ENCODE measurements at regions of chr12 and their contacts with region 1.

Region 1: DNA sequence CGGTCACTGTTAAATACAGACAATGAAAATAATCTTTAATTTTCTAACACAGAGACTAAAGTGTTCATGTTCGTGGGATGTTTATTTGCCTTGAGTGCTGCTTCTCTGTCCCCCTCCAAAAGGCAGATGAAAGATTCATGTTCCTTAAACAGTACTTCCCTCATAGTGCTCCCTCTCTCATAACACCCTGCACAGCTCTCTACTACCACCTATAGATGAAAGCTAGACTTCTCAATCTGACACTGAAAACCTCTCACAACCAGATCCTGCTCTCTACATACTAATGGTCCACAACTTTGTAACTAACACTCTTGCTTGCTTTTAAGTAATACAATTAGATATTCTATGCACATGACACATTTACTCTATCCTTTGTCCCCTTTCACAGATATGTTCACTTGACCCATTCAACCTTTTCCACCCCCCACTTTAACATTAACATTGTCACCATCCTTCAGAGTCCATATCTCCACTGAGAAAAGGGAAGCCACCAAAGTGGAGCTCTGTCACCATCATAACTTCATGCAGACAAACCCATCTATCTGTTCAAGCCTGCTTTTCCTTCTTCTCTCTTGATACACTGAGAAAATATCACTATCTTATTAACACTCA is 266.4 kb upstream of the USP15 start:
- DNase-seq: peak; percentile 48
- ATAC-seq: peak; percentile 96
- H3K4me3 ChIP-seq: no peak overlapping the region
- H3K27ac ChIP-seq: no peak overlapping the region
- H3K4me1 ChIP-seq: no peaks in the 10 kb centered on the region
- H3K27me3 ChIP-seq: no peaks in the 10 kb centered on the region
- CTCF ChIP-seq: peak; percentile 51 to 82 (median 75); a peak in 5 of 6 replicates
- POLR2A ChIP-seq: no peak
- RAD21 ChIP-seq: peak; percentile 76

Region 2: GRCh38 chr12:60501124-60501729 is 1492.6 kb before region 1 on chr12:
- CTCF ChIA-PET with region 1: no interaction called
- POLR2A ChIA-PET with region 1: no interaction called
- RAD21 ChIA-PET with region 1: no interaction called
- intact Hi-C with region 1: loop called (anchors 1 kb)
- DNase-seq: no peak
- ATAC-seq: peak; percentile 53
- H3K4me3 ChIP-seq: no peak overlapping the region
- H3K27ac ChIP-seq: no peak overlapping the region
- H3K4me1 ChIP-seq: no peaks in the 10 kb centered on the region
- H3K27me3 ChIP-seq: no peaks in the 10 kb centered on the region
- CTCF ChIP-seq: peak; percentile 10 to 23 (median 20); a peak in 4 of 6 replicates
- POLR2A ChIP-seq: no peak
- RAD21 ChIP-seq: peak; percentile 49

Region 3: GRCh38 chr12:61546318-61546717 is 447.5 kb before region 1 on chr12:
- CTCF ChIA-PET with region 1: no interaction called
- POLR2A ChIA-PET with region 1: no interaction called
- RAD21 ChIA-PET with region 1: no interaction called
- intact Hi-C with region 1: loop called (anchors 5 kb)
- DNase-seq: peak; percentile 26
- ATAC-seq: peak; percentile 82
- H3K4me3 ChIP-seq: no peak overlapping the region
- H3K27ac ChIP-seq: no peak overlapping the region
- H3K4me1 ChIP-seq: no peaks in the 10 kb centered on the region
- H3K27me3 ChIP-seq: no peaks in the 10 kb centered on the region
- CTCF ChIP-seq: peak; percentile 17 to 42 (median 39); a peak in 4 of 6 replicates
- POLR2A ChIP-seq: no peak
- RAD21 ChIP-seq: peak; percentile 43

Region 4: GRCh38 chr12:61654698-61655097 is 339.1 kb before region 1 on chr12:
- CTCF ChIA-PET with region 1: no interaction called
- POLR2A ChIA-PET with region 1: no interaction called
- RAD21 ChIA-PET with region 1: no interaction called
- intact Hi-C with region 1: loop called (anchors 5 kb)
- DNase-seq: peak; percentile 13
- ATAC-seq: peak; percentile 60
- H3K4me3 ChIP-seq: no peak overlapping the region
- H3K27ac ChIP-seq: no peak overlapping the region
- H3K4me1 ChIP-seq: no peaks in the 10 kb centered on the region
- H3K27me3 ChIP-seq: no peaks in the 10 kb centered on the region
- CTCF ChIP-seq: peak in 2 of 3 experiments; percentile 26 to 40; a peak in 3 of 6 replicates
- POLR2A ChIP-seq: no peak
- RAD21 ChIP-seq: peak; percentile 19; the same call in 1 of the 2 replicates

Region 5: GRCh38 chr12:62379026-62379722 is 385.3 kb after region 1 on chr12:
- CTCF ChIA-PET with region 1: no interaction called
- POLR2A ChIA-PET with region 1: no interaction called
- RAD21 ChIA-PET with region 1: no interaction called
- intact Hi-C with region 1: no loop called
- DNase-seq: no peak
- ATAC-seq: no peak
- H3K4me3 ChIP-seq: no peak overlapping the region
- H3K27ac ChIP-seq: no peak overlapping the region
- H3K4me1 ChIP-seq: no peaks in the 10 kb centered on the region
- H3K27me3 ChIP-seq: no peaks in the 10 kb centered on the region
- CTCF ChIP-seq: no peak
- POLR2A ChIP-seq: no peak
- RAD21 ChIP-seq: no peak